ENCODE measurements at regions of chr14 and their contacts with region 1.

Region 1: DNA sequence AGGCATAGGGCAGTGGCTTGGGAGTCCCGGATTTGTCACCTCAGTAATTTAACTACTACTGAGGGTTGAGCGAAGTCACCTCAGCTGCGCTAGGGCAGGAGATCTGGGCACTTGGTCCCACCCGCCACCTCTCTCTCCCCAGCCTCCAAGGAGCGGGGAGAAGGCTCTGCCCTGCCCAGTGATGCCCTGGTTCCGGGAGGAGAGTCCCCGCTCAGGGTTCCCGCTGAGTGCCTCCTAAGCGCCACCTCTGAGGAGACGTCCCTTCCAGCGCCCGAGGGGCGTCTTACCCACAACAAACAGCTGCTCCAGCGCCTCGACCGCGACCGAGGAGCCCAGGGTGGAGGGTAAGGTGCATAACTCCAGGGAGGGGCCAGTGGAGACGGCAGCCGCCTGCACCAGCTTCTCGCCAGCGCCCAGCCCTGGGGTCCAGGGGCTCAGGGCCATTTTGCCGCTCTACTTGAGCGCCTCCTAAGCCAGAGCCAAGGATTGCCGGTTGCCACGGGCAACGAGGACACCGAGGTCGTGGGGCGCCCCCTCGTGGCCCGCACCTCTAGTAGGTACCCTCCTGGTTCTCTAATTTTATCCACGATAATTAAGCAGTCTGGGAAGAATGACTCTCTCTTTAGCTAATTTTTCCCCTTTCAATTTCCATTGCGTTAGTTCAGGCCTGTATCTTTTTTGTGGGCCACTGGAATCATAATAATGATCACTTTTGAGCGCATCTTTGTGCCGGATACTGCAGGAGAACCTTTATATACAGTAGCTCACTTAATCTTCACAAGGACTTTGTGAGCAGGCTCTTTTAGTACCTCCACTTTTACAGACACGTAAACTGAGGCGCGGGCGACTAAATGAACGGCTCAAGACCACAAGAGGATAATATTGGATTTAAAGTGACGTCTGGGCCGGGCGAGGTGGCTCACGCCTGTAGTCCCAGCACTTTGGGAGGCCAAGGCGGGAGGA is at the start of gene CCDC175:
- DNase-seq: peak; percentile 66
- H3K4me3 Mint-ChIP-seq: peak within 1 kb of the TSS; percentile 76
- H3K27ac Mint-ChIP-seq: no peak within 1 kb of the TSS
- H3K4me1 Mint-ChIP-seq: peaks cover 13% of the 10 kb centered on the region
- H3K27me3 Mint-ChIP-seq: peaks cover 27% of the 10 kb centered on the region
- total RNA-seq, gene CCDC175: not detected in 2 replicates

Region 2: DNA sequence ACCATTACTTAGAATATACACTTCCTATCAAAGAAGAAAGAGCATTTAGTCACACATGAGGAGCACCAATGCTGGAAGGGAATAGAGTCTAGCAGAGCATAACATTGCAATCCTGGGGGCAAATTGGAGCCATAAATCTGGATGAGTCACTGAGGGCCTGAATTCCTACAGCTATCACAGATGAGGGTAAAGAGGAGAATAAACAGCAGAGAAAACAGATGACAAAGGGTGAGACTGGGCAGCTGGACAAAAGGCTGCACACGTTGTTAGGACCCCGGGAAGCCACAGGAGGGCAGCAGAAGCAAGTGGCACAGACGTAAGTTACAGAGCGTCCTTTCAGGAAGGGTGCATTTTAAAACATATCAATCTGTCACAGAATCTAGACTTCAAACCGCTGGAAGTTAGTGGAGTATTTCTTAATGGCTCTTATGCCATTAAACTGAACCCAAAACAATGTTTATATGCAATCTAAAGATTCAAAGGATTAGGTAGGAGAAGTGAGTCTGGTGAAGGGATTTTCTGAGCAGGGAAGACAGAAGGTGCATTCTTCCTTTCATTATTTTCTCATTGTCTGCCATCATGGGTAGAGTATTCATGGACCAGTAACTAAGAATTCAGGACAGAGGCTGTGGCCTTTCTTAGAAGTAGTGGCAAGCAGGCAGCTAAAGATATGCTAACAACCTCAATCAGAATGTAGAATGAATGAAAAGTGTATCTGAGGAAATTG is 548.0 kb before region 1 on chr14:
- intact Hi-C with region 1: loop called (anchors 1 kb)
- DNase-seq: no peak
- H3K4me3 Mint-ChIP-seq: no peak overlapping the region
- H3K27ac Mint-ChIP-seq: no peak overlapping the region
- H3K4me1 Mint-ChIP-seq: no peaks in the 10 kb centered on the region
- H3K27me3 Mint-ChIP-seq: peaks cover 3% of the 10 kb centered on the region

Region 3: DNA sequence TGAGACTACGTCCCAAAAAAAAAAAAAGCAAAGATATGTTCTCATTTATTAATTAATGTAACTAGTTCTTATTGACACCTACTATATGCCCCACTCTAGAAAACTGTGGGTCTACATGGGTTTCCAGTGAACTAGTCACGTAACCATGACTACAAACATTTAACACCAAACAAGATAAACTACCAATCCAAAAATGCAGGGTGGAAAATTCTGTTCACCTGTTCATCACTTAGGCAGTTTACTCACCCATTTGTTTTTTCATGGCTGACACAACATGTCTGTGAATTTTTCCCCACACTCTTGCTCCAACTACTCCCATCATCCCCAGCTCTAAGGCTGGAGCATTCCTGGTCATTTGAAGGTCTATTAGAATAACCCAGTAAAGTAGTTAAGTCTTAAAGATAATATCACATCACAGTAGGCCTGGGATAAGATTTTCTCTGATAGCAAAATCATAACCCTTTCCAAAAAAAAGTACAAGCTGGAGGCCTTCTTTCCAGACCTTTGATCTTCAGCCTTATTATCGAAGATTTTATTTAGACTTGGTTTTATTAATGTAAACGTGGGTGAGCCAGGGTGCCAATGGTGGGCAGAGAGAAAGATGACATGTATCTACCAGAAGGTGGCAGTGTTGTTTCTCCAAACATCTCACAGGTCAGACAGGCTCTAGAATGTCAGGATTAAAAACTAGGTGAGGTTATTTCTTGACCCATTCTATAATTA is 449.7 kb before region 1 on chr14:
- intact Hi-C with region 1: loop called (anchors 1 kb)
- DNase-seq: peak; percentile 1
- H3K4me3 Mint-ChIP-seq: no peak overlapping the region
- H3K27ac Mint-ChIP-seq: no peak overlapping the region
- H3K4me1 Mint-ChIP-seq: no peaks in the 10 kb centered on the region
- H3K27me3 Mint-ChIP-seq: peaks cover 2% of the 10 kb centered on the region

Region 4: DNA sequence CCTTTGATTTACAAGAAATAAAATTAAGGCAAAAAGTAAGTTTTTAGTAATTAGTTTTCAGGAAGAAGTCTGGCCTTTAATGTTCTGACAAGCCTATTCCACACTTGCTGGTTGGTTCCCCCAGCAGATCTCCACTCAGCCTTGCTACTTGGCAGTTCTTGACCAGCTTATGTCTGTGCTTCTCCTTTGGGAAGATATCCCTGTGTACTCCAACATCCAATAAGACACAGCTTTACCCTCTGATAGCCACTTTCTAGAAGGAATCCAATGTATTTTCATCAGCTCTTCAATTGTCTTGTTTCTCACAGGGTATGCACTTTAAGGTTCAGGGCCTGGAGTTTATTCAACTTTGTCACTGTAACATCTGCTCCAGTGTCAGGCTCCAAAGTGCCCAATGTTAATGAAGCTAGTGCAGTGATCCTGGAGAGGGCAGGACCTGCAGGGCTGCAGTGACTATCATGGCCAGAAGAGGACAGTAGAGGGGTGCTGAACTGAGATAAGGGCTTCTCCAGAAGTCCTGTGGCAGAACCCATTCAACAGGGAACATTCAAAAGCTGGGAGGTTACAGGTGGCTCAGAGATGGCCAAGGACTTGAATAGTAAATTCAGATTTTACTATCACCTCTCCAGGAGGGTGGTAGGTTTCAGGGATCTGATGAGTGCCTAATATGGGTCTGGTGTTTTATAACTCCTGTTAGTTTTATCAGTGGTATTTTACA is 69.4 kb before region 1 on chr14:
- intact Hi-C with region 1: loop called (anchors 1 kb)
- DNase-seq: peak; percentile 34
- H3K4me3 Mint-ChIP-seq: no peak overlapping the region
- H3K27ac Mint-ChIP-seq: no peak overlapping the region
- H3K4me1 Mint-ChIP-seq: peaks cover 4% of the 10 kb centered on the region
- H3K27me3 Mint-ChIP-seq: peaks cover 6% of the 10 kb centered on the region

Region 5: DNA sequence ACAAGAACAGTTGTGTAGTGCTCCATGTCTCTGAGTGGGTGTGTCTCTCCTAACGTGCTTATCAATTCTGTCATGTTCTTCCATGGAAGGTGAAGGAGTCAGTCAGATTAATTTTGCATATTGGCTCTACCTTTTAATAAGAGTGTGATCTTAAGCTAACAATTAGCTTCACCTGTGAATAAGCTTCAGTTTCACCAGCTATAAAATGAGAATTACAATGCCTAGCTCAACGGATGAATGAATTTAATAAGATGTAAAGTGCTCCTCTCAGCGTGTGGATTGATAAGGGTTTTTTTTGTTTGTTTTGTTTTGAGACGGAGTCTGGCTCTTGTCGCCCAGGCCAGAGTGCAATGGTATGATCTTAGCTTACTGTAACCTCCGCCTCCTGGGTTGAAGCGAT is 32.7 kb before region 1 on chr14:
- intact Hi-C with region 1: no loop called
- DNase-seq: no peak
- H3K4me3 Mint-ChIP-seq: no peak overlapping the region
- H3K27ac Mint-ChIP-seq: no peak overlapping the region
- H3K4me1 Mint-ChIP-seq: no peaks in the 10 kb centered on the region
- H3K27me3 Mint-ChIP-seq: peaks cover 2% of the 10 kb centered on the region